Brain microvascular endothelial cell (primary cell): ENCODE measurements at regions of chr2 and their contacts with region 1.

Region 1: DNA sequence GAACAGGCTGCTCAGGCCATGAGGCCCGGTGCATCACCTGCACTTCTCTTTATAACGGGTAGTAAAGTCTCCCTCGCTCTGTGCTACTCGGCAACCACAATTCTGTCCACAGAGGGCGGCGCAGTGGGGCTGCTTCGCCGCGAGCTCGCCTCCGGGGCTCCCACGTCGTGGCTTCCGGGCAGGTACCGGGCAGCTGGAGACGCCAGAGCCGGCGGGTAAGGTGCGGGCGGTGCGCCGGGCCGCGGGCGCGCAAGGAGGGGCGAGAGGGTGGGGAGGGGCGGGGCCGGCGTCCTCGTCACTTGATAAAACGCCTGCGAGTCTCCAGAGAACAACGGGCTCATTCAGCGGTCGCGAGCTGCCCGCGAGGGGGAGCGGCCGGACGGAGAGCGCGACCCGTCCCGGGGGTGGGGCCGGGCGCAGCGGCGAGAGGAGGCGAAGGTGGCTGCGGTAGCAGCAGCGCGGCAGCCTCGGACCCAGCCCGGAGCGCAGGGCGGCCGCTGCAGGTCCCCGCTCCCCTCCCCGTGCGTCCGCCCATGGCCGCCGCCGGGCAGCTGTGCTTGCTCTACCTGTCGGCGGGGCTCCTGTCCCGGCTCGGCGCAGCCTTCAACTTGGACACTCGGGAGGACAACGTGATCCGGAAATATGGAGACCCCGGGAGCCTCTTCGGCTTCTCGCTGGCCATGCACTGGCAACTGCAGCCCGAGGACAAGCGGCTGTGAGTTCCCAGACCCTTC is at the start of gene ITGA6:
- DNase-seq: peak; percentile 30
- H3K4me3 ChIP-seq: peak within 1 kb of the TSS; percentile 64
- H3K27ac ChIP-seq: no peak within 1 kb of the TSS
- H3K27me3 ChIP-seq: no peaks in the 10 kb centered on the region
- CTCF ChIP-seq: no peak

Region 2: GRCh38 chr2:172196768-172197431 is 230.5 kb before region 1 on chr2:
- in situ Hi-C with region 1: loop called (anchors 25 kb)
- DNase-seq: peak; percentile 27
- H3K4me3 ChIP-seq: no peak overlapping the region
- H3K27ac ChIP-seq: no peak overlapping the region
- H3K27me3 ChIP-seq: no peaks in the 10 kb centered on the region
- CTCF ChIP-seq: no peak

Region 3: GRCh38 chr2:172753610-172754009 is 326.2 kb after region 1 on chr2:
- in situ Hi-C with region 1: no loop called
- DNase-seq: no peak
- H3K4me3 ChIP-seq: no peak overlapping the region
- H3K27ac ChIP-seq: no peak overlapping the region
- H3K27me3 ChIP-seq: no peaks in the 10 kb centered on the region
- CTCF ChIP-seq: no peak